HepG2 (cell line): ENCODE measurements at regions of chr5 and their contacts with region 1.

Region 1: DNA sequence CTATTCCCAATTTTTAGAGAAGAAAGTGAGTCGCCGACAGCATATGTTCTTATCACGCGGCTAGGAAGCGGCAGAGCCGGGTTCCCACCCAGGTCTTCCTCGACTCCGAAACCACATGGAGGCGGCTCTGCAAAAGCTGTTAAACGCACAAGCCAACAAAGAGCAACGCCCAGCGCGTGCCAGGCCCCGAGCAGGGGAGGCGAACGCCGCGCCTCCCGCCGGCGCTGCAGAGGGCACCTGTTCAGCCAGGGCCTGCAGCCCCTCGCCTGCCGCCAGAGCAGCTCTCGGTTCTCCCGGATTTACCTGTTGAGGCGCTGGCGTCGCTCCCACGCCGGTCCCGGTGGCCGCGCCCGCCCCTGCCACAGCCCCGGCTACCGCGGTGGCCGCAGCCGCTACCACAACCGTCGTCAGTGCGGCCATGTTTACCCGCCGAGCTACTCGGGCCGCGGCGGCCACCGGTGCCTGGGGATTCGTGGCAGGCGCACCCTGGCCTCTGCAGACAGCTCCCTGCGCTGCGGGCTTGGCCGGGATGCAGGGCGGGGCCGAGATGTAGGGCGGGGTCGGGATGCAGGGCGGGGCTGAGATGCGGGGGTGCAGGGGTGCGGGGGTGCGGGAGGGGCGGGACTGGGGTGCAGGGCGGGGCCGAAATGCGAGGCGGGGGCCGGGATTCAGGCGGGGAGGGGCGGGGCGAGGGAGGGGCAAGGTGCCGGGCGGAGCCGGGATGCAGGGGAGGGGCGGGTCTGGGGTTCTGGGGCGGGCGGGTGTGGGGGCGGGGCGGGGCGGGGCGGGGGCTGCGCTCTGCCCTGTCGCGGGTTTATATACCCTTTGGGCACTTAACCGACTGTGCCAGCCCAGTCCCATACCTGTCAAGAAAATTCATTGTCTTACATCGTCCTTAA is at the start of gene CCDC112:
- DNase-seq: peak; percentile 36
- ATAC-seq: peak; percentile 95
- H3K4me3 ChIP-seq: peak within 1 kb of the TSS; percentile 59 to 82 (median 77)
- H3K27ac ChIP-seq: peak within 1 kb of the TSS; percentile 38
- H3K4me1 ChIP-seq: peaks cover 14% of the 10 kb centered on the region
- H3K27me3 ChIP-seq: no peaks in the 10 kb centered on the region
- CTCF ChIP-seq: peak; percentile 13; the same call in 1 of the 2 replicates
- EP300 ChIP-seq: no peak
- POLR2A ChIP-seq: peak; percentile 56; a peak in 3 of 4 replicates
- RAD21 ChIP-seq: no peak; the same call in 1 of the 2 replicates
- total RNA-seq, gene CCDC112: 2.8 and 3.3 TPM in 2 replicates

Region 2: GRCh38 chr5:115262321-115263077 is 33.9 kb before region 1 on chr5 and contains the start of gene PGGT1B:
- CTCF ChIA-PET with region 1: no interaction called
- POLR2A ChIA-PET with region 1: interaction called, 8 read pairs
- in situ Hi-C with region 1: no loop called
- intact Hi-C with region 1: loop called (anchors 2 kb)
- DNase-seq: peak; percentile 58
- ATAC-seq: peak; percentile 100
- H3K4me3 ChIP-seq: peak within 1 kb of the TSS; percentile 75 to 96 (median 85)
- H3K27ac ChIP-seq: peak within 1 kb of the TSS; percentile 81
- H3K4me1 ChIP-seq: peaks cover 32% of the 10 kb centered on the region
- H3K27me3 ChIP-seq: no peaks in the 10 kb centered on the region; a peak in 1 of 5 replicates
- CTCF ChIP-seq: 0 out of 2 replicates have a peak, but pooled peaks have one; percentile 20
- EP300 ChIP-seq: no peak
- POLR2A ChIP-seq: peak; percentile 81 to 85
- RAD21 ChIP-seq: peak; percentile 59
- total RNA-seq, gene PGGT1B: 42.7 and 72.3 TPM in 2 replicates

Region 3: DNA sequence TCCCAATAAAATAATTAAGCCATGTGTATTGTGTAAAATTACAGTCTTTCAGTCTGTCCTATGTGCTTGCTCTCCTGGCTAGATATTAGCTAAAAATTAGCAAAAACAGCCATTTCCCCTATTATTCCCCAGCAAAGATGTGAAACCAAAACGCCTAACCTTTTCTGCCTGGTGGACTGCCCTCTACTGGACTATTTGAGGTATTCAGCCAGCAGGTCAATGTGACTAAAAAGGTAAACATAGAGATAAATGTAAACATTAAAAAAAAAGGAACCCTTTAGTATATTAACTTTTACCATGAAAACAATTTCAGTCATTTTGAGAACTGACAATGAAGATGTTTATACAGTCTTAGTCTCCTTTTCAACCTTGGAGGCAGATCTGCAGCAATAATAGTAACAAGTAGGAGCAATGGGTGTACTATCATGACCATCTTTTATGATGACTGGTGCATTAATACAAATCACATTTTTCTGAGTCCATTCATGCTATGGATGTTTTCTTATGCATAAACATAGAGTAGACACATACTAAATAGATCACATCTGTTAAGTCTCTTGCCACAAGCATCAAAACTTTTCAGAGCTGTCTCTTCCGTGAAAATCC is 534.9 kb after region 1 on chr5:
- CTCF ChIA-PET with region 1: no interaction called
- POLR2A ChIA-PET with region 1: no interaction called
- in situ Hi-C with region 1: no loop called
- intact Hi-C with region 1: loop called (anchors 10 kb)
- DNase-seq: peak; percentile 57
- ATAC-seq: peak; percentile 82
- H3K4me3 ChIP-seq: no peak overlapping the region
- H3K27ac ChIP-seq: no peak overlapping the region
- H3K4me1 ChIP-seq: peaks cover 24% of the 10 kb centered on the region
- H3K27me3 ChIP-seq: no peaks in the 10 kb centered on the region
- CTCF ChIP-seq: peak; percentile 75
- EP300 ChIP-seq: no peak
- POLR2A ChIP-seq: no peak
- RAD21 ChIP-seq: peak; percentile 46; the same call in 1 of the 2 replicates